ENCODE measurements at regions of chr22 and their contacts with region 1.

Region 1: DNA sequence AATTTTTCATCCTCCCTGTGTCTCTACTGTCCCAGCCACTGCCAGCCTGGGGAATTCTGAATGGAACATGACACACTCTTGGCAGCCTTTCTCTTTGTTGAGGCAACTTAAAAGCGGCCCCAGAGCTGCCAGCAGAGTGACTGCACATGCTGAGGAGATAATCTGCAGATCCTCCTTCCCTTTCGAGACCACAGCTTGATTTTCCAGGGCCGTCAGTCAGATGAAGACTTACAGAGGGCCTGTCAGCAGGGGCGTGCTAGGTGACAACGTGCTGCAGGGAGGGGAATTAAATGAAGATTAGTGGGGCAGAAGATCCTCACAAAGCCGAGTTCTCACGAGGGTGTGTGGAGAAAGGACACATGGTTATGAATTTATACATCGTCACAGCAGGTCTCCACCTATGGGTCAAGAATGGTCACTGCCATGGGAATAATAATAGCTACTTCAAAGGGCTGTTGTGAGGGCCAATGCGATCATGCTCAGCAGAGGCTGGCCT is 193.5 kb upstream of the PITPNB start:
- DNase-seq: no peak
- H3K4me3 ChIP-seq: no peak overlapping the region
- H3K27ac ChIP-seq: peak overlapping the region; percentile 4
- H3K27me3 ChIP-seq: no peaks in the 10 kb centered on the region
- CTCF ChIP-seq: peak; percentile 55

Region 2: DNA sequence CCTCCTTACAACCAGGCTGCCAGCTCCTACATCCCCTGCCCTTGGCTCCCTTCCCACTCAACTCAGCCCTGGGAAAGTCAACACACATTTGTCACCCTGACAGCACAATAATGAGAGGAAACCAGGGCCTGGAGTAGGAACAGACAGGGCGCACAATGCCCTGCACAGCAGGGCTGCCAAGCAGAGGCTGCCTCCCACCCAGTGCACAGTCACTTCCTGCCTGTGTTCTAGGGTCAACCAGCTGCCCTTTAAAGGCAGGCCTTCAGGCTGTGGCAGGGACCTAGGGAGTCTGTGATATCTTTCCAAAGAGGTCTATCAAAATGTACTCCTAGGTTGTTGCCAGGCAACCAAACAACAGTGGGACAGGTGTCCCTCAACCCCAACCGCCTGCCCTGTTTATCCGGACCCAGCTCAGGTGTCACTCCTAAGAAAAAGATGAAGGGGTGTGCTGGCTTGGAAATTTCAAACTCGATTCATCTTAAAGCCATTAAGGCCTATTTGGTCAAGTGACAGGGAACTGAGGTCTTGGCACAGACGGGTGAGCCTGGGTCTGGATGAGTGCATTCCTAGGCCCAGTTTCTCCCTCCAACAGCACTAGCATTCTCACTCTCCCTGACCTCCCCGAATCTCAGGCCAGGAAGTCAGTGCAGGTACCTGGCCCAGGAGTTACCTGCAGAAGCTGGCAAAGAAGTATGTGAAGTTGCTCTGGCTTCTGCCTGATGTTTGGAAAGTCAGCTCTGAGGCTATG is 83.2 kb before region 1 on chr22:
- CTCF ChIA-PET with region 1: no interaction called
- POLR2A ChIA-PET with region 1: no interaction called
- DNase-seq: no peak
- H3K4me3 ChIP-seq: no peak overlapping the region
- H3K27ac ChIP-seq: no peak overlapping the region
- H3K27me3 ChIP-seq: no peaks in the 10 kb centered on the region
- CTCF ChIP-seq: no peak

Region 3: GRCh38 chr22:28094771-28095170 is 17.8 kb before region 1 on chr22:
- CTCF ChIA-PET with region 1: interaction called, 13 read pairs
- POLR2A ChIA-PET with region 1: no interaction called
- DNase-seq: no peak
- H3K4me3 ChIP-seq: no peak overlapping the region
- H3K27ac ChIP-seq: no peak overlapping the region
- H3K27me3 ChIP-seq: no peaks in the 10 kb centered on the region
- CTCF ChIP-seq: no peak

Region 4: GRCh38 chr22:28123989-28124766 is 11.6 kb after region 1 on chr22:
- CTCF ChIA-PET with region 1: interaction called, 11 read pairs
- POLR2A ChIA-PET with region 1: no interaction called
- DNase-seq: no peak
- H3K4me3 ChIP-seq: no peak overlapping the region
- H3K27ac ChIP-seq: no peak overlapping the region
- H3K27me3 ChIP-seq: no peaks in the 10 kb centered on the region
- CTCF ChIP-seq: no peak